ENCODE measurements at regions of chr2 and their contacts with region 1.

Region 1: GRCh38 chr2:23939987-23940717 is at the start of gene UBXN2A:
- DNase-seq: peak; percentile 75 to 90 (median 82)
- ATAC-seq: peak; percentile 78 to 96 (median 93)
- H3K4me3 ChIP-seq: peak within 1 kb of the TSS; percentile 62 to 97 (median 82)
- H3K27ac ChIP-seq: peak within 1 kb of the TSS; percentile 84 to 97 (median 92)
- H3K4me1 ChIP-seq: peaks cover 0 to 31% (median 24%) of the 10 kb centered on the region in 12 donors
- H3K27me3 ChIP-seq: no peaks in the 10 kb centered on the region
- CTCF ChIP-seq: no peak
- POLR2A ChIP-seq: peak in 1 of 2 donors; percentile 57
- total RNA-seq, gene UBXN2A: 15.8 to 24.0 (median 19.6) TPM

Region 2: GRCh38 chr2:23230885-23231284 is 709.3 kb before region 1 on chr2:
- intact Hi-C with region 1: no loop called
- DNase-seq: no peak
- ATAC-seq: no peak
- H3K4me3 ChIP-seq: no peak overlapping the region
- H3K27ac ChIP-seq: no peak overlapping the region
- H3K4me1 ChIP-seq: no peaks in the 10 kb centered on the region
- H3K27me3 ChIP-seq: no peaks in the 10 kb centered on the region
- CTCF ChIP-seq: no peak
- POLR2A ChIP-seq: no peak

Region 3: DNA sequence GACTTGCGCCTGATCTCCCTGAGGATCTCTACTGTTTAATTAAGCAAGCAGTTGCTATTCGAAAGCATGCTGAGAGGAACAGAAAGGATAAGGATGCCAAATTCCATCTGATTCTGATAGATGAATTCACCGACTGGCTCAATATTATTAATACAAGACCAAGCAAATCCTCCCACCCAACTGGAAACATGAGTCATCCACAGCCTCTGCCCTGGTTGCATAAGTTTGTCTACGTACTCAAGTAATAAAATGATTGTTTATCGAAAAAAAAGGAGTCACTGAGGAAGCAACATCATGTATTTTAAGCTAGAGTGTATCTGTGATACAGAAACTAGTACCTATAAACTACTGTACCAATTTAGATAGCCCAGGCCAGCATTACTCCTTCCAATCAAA is 39.2 kb before region 1 on chr2:
- intact Hi-C with region 1: no loop called
- DNase-seq: no peak
- ATAC-seq: peak in 1 of 4 donors; percentile 47
- H3K4me3 ChIP-seq: no peak overlapping the region
- H3K27ac ChIP-seq: no peak overlapping the region
- H3K4me1 ChIP-seq: peaks cover 0 to 43% (median 23%) of the 10 kb centered on the region in 12 donors
- H3K27me3 ChIP-seq: no peaks in the 10 kb centered on the region
- CTCF ChIP-seq: no peak
- POLR2A ChIP-seq: no peak

Region 4: DNA sequence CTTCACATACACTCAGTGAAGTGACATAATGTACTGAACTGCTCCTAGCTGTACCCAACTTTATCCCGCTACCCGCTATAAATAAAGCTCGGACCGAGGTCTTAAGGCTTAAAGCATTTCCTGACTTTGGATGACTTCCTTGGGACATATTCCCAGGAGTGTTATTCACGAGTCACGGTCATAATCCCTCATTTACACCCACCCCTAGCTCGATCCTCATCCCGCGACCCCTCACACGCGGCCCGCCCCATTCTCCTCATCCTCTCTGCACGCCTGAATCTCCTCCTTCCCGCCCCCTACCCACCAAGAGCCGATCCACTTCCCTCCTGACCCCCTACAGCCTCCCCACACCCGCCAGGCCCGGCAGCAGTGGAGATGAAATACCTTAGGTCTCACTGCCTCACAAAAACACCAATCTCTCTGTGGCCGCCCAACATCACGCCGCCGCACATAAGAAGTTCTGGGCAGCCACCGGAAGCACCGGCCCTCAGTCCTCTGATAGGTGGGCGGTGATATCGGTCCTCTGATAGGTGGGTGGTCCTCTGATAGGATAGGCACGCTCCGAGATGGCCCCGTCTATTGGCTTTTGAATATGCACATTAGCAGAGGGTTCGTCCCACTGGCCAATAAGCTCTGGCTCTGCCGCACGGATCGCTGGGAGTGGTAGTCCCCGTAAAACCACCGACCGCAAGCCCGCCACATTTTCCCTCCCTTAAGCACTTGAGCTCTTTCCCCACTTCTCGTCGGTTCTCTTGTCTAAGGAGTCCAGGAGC is 107.0 kb after region 1 on chr2 and contains the start of gene WDCP:
- intact Hi-C with region 1: loop called in 2 of 10 experiments (anchors 10 kb)
- DNase-seq: peak; percentile 93 to 97 (median 96)
- ATAC-seq: peak; percentile 99 to 100 (median 100)
- H3K4me3 ChIP-seq: peak within 1 kb of the TSS; percentile 52 to 87 (median 73)
- H3K27ac ChIP-seq: peak within 1 kb of the TSS in 10 of 12 donors; percentile 33 to 79 (median 68)
- H3K4me1 ChIP-seq: peaks cover 0 to 39% (median 19%) of the 10 kb centered on the region in 12 donors
- H3K27me3 ChIP-seq: no peaks in the 10 kb centered on the region
- CTCF ChIP-seq: no peak
- POLR2A ChIP-seq: peak in 1 of 2 donors; percentile 86
- total RNA-seq, gene WDCP: 4.9 to 9.8 (median 6.1) TPM